Heart left ventricle (tissue), 16 donors: ENCODE measurements at regions of chr6 and their contacts with region 1.

Region 1: DNA sequence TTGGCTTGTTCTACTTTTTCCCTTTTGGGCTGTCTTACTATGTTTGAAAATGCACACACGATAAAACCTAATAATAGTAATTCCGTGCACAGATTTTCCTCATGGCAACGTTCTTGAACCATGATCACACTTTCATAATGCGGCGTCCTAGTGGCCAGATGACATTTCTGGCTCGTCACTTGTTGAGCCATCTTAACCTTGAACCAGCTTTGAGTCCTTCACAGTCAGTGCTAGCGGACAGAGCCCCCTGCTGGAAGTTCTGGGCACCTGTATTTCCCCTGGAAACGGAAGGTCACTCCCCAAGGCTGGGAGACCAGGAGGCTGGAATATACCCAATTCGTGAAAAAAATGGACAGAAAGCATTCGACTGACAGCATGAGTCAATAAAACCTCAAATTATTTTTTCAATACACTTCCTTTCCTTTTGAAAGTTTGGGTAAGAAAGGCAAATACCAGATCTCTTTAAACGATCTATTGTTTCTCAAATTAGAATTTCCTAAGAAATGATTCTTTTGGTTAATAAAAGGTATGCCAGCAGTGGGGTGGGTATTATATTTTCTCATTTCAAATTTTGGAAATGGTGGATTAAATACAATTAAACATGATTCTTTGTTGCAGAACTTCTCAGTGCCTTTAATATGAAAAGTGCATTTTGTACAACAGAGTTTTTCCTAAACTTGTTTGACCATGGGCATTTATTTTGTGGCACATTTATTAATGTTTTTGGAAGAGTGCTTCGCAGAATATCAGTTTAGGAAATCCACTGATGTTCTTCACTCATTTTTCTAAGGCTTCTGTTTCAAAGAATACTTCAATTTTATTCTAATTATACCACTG is 542.3 kb downstream of the QKI start:
- DNase-seq: peak; percentile 85 to 87 (median 86)
- ATAC-seq: peak; percentile 77 to 91 (median 90)
- H3K4me3 ChIP-seq: no peak overlapping the region
- H3K27ac ChIP-seq: peak overlapping the region in 9 of 12 donors; percentile 2 to 93 (median 32)
- H3K4me1 ChIP-seq: peaks cover 0 to 58% (median 16%) of the 10 kb centered on the region in 12 donors
- H3K27me3 ChIP-seq: no peaks in the 10 kb centered on the region
- CTCF ChIP-seq: peak; percentile 89 to 97 (median 94)
- POLR2A ChIP-seq: no peak

Region 2: GRCh38 chr6:162856885-162857284 is 1099.9 kb before region 1 on chr6:
- intact Hi-C with region 1: loop called in 2 of 10 experiments (anchors 5 kb)
- DNase-seq: peak in 1 of 5 donors; percentile 40
- ATAC-seq: peak; percentile 74 to 92 (median 88)
- H3K4me3 ChIP-seq: peak overlapping the region in 9 of 12 donors; percentile 10 to 50 (median 35)
- H3K27ac ChIP-seq: peak overlapping the region in 11 of 12 donors; percentile 10 to 75 (median 56)
- H3K4me1 ChIP-seq: peaks cover 0 to 10% (median 0%) of the 10 kb centered on the region in 12 donors
- H3K27me3 ChIP-seq: no peaks in the 10 kb centered on the region
- CTCF ChIP-seq: peak; percentile 33 to 74 (median 56)
- POLR2A ChIP-seq: no peak

Region 3: DNA sequence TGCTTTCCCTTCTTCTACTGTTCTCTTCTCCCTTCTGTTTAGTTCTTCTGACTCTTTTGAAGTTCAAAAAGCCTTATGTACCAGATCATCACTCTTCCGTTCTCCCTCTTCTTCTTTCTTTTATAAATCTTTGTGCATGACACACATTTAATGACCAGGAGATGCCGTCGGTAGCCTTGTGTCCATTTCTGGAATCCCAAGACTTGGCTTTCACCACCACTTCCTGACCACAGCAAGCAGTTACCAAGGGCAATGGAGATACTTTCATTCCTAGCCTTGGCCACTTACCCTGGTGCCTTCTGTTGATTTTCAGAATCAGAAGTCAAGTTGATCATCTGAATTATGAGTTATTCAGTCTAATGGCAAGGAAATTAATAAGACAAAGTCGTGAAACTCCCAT is 810.8 kb before region 1 on chr6:
- intact Hi-C with region 1: no loop called
- DNase-seq: no peak
- ATAC-seq: no peak
- H3K4me3 ChIP-seq: no peak overlapping the region
- H3K27ac ChIP-seq: no peak overlapping the region
- H3K4me1 ChIP-seq: no peaks in the 10 kb centered on the region
- H3K27me3 ChIP-seq: peaks cover 0 to 4% (median 0%) of the 10 kb centered on the region in 9 donors
- CTCF ChIP-seq: no peak
- POLR2A ChIP-seq: no peak

Region 4: GRCh38 chr6:163413345-163414116 is 543.3 kb before region 1 on chr6:
- intact Hi-C with region 1: loop called in 6 of 10 experiments (anchors 2 to 5 kb)
- DNase-seq: peak; percentile 90 to 95 (median 93)
- ATAC-seq: peak; percentile 71 to 93 (median 90)
- H3K4me3 ChIP-seq: peak overlapping the region; percentile 69 to 93 (median 78)
- H3K27ac ChIP-seq: peak overlapping the region; percentile 95 to 100 (median 99)
- H3K4me1 ChIP-seq: peaks cover 0 to 26% (median 6%) of the 10 kb centered on the region in 12 donors
- H3K27me3 ChIP-seq: no peaks in the 10 kb centered on the region
- CTCF ChIP-seq: no peak
- POLR2A ChIP-seq: peak in 1 of 2 donors; percentile 83

Region 5: DNA sequence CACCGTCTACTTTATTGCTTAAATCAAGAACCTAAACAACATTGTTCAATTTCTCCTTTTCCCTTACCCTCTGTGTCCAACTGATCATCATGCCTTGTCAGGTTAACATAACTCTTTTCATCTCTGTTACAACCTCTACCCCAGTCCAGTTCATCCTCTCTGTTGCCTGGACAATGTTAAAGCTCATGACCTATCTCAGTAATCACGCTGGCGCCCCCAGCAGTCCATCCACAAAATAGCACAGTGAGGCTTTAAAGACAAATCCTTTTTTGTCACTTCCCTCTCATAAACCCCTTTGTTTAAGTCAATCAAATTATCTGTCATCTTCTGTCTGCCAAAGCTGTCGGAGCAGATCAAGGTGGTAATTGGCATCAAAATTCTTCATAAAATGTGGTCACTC is 402.1 kb before region 1 on chr6:
- intact Hi-C with region 1: loop called in 1 of 10 experiments (anchors 5 kb)
- DNase-seq: peak in 3 of 5 donors; percentile 23 to 65 (median 53)
- ATAC-seq: peak in 3 of 4 donors; percentile 46 to 56 (median 48)
- H3K4me3 ChIP-seq: no peak overlapping the region
- H3K27ac ChIP-seq: peak overlapping the region in 2 of 12 donors; percentile 2 to 22
- H3K4me1 ChIP-seq: peaks cover 0 to 57% (median 28%) of the 10 kb centered on the region in 12 donors
- H3K27me3 ChIP-seq: no peaks in the 10 kb centered on the region
- CTCF ChIP-seq: peak; percentile 20 to 59 (median 44)
- POLR2A ChIP-seq: no peak

Region 6: DNA sequence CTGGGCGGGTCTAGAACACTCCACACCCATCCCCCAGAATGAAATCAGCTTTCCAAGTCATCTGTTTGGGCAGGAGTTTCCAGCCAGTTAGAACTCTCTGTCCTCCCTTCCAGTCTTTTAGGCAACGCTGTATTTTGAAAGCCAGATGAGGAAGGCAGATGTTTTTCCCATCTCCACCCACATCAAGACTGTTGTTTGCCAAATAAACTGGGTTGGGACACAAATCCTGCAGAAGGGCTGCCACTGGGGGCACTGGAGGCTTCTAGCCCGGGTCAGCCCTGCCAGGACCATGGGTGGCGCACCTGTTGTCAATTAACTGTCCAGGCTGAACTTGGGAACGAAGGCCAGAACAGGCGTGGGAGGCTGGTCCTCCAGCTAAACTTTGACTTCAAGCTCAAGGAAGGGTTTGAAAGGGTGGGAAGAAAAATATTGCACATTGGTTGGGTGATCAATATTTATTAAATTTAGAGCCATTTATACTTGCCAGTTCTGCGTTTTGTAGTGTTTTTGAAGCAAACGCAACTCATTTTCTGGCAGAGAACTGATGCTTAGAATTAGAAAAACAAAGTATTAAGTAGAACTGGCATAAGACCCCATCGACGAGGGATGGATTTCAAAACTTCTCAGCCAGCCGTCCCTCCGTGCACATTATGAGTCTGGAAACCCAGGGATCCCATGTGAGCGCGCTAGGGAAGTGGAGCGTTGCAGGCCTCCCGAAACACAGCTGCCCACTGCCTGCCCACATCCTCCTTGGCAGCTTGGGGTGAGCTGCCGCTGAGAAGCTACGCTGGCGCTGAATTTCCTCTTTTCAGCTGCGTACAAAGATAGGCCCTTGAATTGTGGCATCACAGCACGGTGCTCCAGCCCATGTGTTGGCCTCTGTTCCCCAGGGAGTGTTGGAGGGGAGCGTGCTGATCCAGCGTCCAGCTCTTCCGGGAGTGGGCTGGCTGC is 244.9 kb before region 1 on chr6:
- intact Hi-C with region 1: loop called in 6 of 10 experiments (anchors 2 to 10 kb)
- DNase-seq: peak; percentile 80 to 91 (median 84)
- ATAC-seq: peak; percentile 71 to 80 (median 77)
- H3K4me3 ChIP-seq: peak overlapping the region in 1 of 12 donors; percentile 12
- H3K27ac ChIP-seq: peak overlapping the region; percentile 67 to 88 (median 78)
- H3K4me1 ChIP-seq: peaks cover 24 to 63% (median 61%) of the 10 kb centered on the region in 12 donors
- H3K27me3 ChIP-seq: no peaks in the 10 kb centered on the region
- CTCF ChIP-seq: peak in 11 of 12 donors; percentile 20 to 59 (median 41)
- POLR2A ChIP-seq: no peak

Region 7: DNA sequence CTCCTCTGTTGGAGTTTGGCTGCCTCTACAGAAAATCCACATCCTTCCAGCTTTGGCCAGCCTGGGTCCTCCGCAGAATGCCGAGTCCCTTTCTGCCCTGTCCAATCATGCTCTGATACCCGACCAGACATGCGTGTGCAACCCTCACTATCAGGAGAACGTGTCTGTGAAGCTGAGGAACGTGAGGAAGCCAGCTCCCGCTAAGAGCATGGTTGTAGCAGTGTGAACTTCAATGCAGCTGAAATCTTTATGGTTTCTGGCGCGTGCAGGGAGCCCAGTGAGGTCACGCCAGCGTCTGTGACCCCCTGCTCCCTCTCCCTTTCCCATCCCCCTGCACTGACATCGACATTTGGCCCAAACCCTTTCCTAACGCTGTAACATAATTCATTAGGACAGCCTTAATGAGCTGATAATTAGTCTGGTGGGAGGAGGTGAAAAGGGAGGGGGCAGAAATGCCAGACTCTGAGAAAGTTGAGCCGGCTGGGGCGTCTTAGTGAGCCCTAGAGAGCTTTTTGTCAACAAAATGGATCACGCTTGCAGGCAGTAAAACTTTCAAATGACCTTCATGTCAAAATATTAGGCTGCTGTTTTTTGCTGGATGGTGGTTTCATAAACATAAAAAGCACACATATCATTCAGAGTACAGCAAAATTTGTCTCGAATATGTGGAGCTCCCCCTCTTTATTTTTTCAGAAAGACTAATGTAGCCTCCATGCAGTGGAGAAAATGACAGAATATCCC is 118.9 kb before region 1 on chr6:
- intact Hi-C with region 1: loop called in 1 of 10 experiments (anchors 5 kb)
- DNase-seq: peak in 4 of 5 donors; percentile 26 to 62 (median 46)
- ATAC-seq: peak; percentile 66 to 88 (median 82)
- H3K4me3 ChIP-seq: peak overlapping the region in 7 of 12 donors; percentile 4 to 39 (median 19)
- H3K27ac ChIP-seq: peak overlapping the region; percentile 6 to 82 (median 60)
- H3K4me1 ChIP-seq: peaks cover 0 to 25% (median 11%) of the 10 kb centered on the region in 12 donors
- H3K27me3 ChIP-seq: no peaks in the 10 kb centered on the region
- CTCF ChIP-seq: no peak
- POLR2A ChIP-seq: no peak

Region 8: GRCh38 chr6:163860287-163861081 is 96.3 kb before region 1 on chr6:
- intact Hi-C with region 1: no loop called
- DNase-seq: peak in 1 of 5 donors; percentile 42
- ATAC-seq: peak in 3 of 4 donors; percentile 66 to 73 (median 73)
- H3K4me3 ChIP-seq: peak overlapping the region in 9 of 12 donors; percentile 11 to 42 (median 18)
- H3K27ac ChIP-seq: no peak overlapping the region
- H3K4me1 ChIP-seq: peaks cover 0 to 12% (median 6%) of the 10 kb centered on the region in 12 donors
- H3K27me3 ChIP-seq: no peaks in the 10 kb centered on the region
- CTCF ChIP-seq: no peak
- POLR2A ChIP-seq: no peak